ENCODE measurements at regions of chr9 and their contacts with region 1.

Region 1: DNA sequence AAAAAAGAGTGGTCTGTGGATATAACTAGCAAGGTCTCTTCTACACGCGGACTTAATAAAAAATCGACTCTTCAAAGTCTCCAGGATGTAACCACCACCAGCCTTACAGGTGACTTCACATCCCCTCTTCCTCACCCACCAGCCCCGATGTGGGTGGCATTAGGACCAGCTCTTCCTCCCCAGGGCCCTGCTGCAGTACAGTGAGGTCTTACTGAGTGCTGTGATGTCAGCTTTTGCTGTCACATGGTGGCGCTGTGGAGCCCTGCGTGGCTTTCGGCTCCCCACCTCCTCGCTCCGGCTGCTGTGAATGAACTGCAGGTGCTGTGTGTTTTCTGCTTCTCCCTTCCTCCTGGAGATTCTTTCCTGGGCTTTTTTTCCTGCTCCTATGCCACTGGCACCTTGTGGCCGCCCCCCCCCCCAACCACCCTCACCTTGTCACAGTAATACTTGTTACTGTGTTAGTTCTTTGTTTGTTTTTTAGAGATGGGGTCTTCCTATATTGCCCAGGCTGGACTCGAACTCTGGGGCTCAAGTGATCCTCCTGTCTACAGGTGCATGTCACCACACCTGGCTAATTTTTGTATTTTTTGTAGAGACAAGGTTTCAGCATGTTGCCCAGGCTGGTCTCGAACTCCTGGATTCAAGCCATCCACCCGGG is 15.8 kb upstream of the RAPGEF1 start:
- DNase-seq: peak; percentile 92
- H3K4me3 Mint-ChIP-seq: no peak overlapping the region
- H3K27ac Mint-ChIP-seq: no peak overlapping the region
- H3K4me1 Mint-ChIP-seq: peaks cover 4% of the 10 kb centered on the region
- H3K27me3 Mint-ChIP-seq: peaks cover 52% of the 10 kb centered on the region

Region 2: DNA sequence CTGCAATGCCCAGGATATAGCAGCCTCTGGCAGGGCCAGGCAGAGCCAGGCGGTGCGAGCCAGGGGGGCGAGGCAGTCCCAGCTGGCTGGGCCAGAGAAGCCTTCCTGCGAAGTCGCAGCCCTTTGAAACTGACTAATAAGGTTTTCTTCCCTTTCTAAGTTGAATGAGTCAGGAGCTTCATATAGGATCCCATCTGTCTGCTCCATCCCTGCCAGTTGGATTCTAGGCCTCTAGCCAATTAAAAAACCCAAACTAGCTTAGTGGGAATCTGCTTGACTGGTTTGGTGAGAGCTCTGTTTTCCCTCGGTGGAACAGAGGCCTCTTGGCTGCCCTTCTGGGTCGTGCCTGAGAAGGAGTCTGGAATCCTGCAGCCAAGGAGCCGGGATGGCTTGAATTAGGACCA is 54.3 kb after region 1 on chr9:
- CTCF ChIA-PET with region 1: no interaction called
- DNase-seq: no peak
- H3K4me3 Mint-ChIP-seq: no peak overlapping the region
- H3K27ac Mint-ChIP-seq: no peak overlapping the region
- H3K4me1 Mint-ChIP-seq: no peaks in the 10 kb centered on the region
- H3K27me3 Mint-ChIP-seq: peaks cover 69% of the 10 kb centered on the region

Region 3: GRCh38 chr9:132249123-132249522 is 493.5 kb after region 1 on chr9:
- CTCF ChIA-PET with region 1: interaction called, 48 read pairs
- DNase-seq: no peak
- H3K4me3 Mint-ChIP-seq: no peak overlapping the region
- H3K27ac Mint-ChIP-seq: no peak overlapping the region
- H3K4me1 Mint-ChIP-seq: no peaks in the 10 kb centered on the region
- H3K27me3 Mint-ChIP-seq: peaks cover 54% of the 10 kb centered on the region

Measured in activated naive CD4-positive, alpha-beta T cell treated with anti-CD3 and anti-CD28 coated beads, Interleukin-2, amount 10 ng/mL, durations not matched to agents 7 days and 5 days (primary cell).